A673 (cell line): ENCODE measurements at regions of chr11 and their contacts with region 1.

Region 1: GRCh38 chr11:58579192-58580129 is 598 bp downstream of the ZFP91 start:
- DNase-seq: peak; percentile 97
- H3K4me3 ChIP-seq: peak overlapping the region; percentile 67
- H3K27ac ChIP-seq: peak overlapping the region; percentile 100
- H3K4me1 ChIP-seq: peaks cover 22% of the 10 kb centered on the region
- H3K27me3 ChIP-seq: no peaks in the 10 kb centered on the region
- CTCF ChIP-seq: peak; percentile 78

Region 2: DNA sequence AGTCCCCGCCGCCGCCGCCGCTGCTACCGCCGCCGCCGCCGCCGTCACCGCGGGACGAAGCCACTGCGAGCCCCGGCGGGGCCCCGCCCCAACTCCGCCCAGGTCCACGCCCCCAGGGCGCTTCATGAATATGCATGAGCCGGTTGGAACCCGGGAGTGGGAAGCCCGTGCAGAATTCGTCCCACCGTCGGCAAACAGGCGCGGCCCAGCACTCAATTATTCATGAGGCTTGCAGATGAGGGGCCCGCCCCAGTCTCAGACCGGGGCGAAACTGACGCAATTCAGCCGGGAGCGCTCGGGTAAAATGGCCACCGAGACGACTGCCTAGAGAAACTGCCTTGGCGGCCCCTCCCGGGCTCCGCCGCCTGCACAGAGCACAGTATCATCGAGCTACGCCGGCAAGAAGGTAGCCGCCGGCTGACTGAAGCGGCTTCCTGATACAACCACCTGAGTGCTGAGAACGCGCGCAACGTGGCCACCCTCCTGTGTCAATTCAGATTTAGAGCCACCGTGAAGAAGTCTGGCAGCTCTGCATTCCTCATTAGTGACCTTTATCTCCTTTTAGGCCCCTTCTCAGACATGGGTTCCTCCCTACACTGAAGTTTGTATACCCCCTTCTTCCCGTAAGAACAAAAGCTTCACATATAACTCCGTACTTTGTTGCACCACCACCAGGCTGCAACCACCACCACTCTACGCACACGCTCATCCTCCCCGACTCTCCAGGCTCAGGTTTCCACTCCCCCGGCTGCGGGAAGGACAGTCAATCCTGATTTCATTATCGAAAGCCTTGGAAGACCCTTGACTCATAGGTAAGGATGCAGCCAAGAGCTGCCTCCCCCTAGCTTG is 1254.4 kb before region 1 on chr11 and contains the start of gene TNKS1BP1:
- CTCF ChIA-PET with region 1: no interaction called
- POLR2A ChIA-PET with region 1: no interaction called
- intact Hi-C with region 1: loop called (anchors 10 kb)
- DNase-seq: peak; percentile 99
- H3K4me3 ChIP-seq: peak within 1 kb of the TSS; percentile 74
- H3K27ac ChIP-seq: peak within 1 kb of the TSS; percentile 85
- H3K4me1 ChIP-seq: peaks cover 43% of the 10 kb centered on the region
- H3K27me3 ChIP-seq: no peaks in the 10 kb centered on the region
- CTCF ChIP-seq: no peak
- total RNA-seq, gene TNKS1BP1: 80.4 and 88.8 TPM in 2 replicates

Region 3: DNA sequence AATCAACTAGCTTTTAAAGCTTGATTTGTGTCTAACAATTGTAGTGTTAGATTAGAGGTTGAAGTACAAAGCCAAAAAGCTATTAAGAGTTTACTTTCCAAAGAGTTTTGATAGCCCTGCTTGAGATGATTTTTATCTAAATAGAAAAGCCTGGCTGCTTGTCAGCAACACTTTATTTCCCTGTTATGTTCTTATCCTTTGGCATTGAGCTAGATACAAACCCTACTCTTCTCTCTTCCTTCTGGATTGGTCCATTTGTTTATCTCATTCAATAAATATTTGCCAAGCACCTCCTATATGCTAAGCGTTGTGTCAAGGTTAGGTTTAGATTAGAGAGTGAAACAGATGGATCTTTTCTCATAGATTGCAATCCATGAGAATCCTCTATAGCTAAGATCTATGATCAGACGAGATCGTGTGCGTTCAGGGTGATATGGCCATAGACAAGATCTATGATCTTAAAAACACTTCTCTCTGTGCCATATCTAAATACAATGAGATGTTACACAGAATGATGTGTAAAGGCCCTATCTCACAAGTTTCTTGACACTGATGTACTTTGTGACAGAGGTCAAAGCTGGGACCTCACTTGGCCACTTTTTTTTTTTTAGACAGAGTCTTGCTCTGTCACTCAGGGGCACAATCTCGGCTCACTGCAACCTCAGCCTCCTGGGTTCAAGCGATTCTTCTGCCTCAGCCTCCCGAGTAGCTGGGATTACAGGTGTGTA is 760.0 kb before region 1 on chr11:
- CTCF ChIA-PET with region 1: no interaction called
- POLR2A ChIA-PET with region 1: no interaction called
- intact Hi-C with region 1: no loop called
- DNase-seq: no peak
- H3K4me3 ChIP-seq: no peak overlapping the region
- H3K27ac ChIP-seq: no peak overlapping the region
- H3K4me1 ChIP-seq: no peaks in the 10 kb centered on the region
- H3K27me3 ChIP-seq: no peaks in the 10 kb centered on the region
- CTCF ChIP-seq: no peak

Region 4: DNA sequence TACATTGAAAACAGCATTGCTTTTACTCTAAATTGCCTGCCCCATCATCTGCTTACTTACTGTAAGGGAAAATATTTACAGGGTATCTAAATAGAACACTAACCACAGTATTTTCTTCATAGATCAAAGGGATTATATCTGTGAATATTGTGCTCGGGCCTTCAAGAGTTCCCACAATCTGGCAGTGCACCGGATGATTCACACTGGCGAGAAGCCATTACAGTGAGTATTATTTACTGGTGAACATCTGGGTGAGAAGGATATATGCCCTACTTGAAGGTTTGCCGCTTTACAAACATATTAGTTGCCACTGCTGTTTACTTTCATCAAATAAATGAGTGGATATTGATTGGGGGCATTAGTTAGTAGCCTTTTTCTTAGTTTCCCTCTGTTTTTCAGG is 37.1 kb after region 1 on chr11:
- CTCF ChIA-PET with region 1: interaction called, 3 read pairs
- POLR2A ChIA-PET with region 1: no interaction called
- intact Hi-C with region 1: loop called (anchors 5 kb)
- DNase-seq: peak; percentile 50
- H3K4me3 ChIP-seq: no peak overlapping the region
- H3K27ac ChIP-seq: no peak overlapping the region
- H3K4me1 ChIP-seq: peaks cover 17% of the 10 kb centered on the region
- H3K27me3 ChIP-seq: no peaks in the 10 kb centered on the region
- CTCF ChIP-seq: no peak

Region 5: GRCh38 chr11:58675334-58676155 is 96.1 kb after region 1 on chr11:
- CTCF ChIA-PET with region 1: interaction called, 3 read pairs
- POLR2A ChIA-PET with region 1: no interaction called
- intact Hi-C with region 1: loop called (anchors 1 kb)
- DNase-seq: peak; percentile 75
- H3K4me3 ChIP-seq: no peak overlapping the region
- H3K27ac ChIP-seq: no peak overlapping the region
- H3K4me1 ChIP-seq: no peaks in the 10 kb centered on the region
- H3K27me3 ChIP-seq: no peaks in the 10 kb centered on the region
- CTCF ChIP-seq: peak; percentile 99

Region 6: DNA sequence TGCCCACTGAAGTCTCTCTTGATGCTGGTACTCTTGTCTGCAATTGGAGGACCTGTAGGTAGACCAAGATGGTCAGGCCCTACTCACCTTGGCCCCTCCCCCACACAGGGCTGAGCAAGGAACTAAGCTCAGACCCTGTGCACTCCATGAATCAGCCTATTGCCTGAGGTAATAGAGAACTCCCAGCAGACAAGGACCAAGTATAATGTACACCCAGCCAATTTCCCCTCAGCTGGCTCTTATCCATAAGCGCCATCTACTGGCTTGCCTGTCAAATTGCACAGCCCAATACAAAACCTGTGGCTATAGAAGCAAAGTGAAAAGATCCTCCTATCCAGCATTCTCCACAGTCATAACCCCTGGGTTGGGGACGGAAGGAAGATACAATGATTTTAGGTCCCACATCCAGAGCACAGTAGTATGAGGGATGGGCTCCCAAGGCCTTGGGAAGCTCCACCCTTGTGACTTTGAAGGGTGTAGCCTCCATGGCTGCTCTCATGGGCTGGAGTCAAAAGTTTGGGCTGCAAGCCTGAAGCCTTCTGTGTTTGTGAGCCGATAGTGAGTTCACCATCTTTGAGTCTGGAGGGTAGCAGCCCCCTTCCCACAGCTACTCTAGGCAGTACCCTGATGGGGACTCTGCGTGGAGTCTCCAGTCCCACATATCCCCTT is 209.0 kb after region 1 on chr11:
- CTCF ChIA-PET with region 1: no interaction called
- POLR2A ChIA-PET with region 1: no interaction called
- intact Hi-C with region 1: loop called (anchors 5 kb)
- DNase-seq: peak; percentile 78
- H3K4me3 ChIP-seq: no peak overlapping the region
- H3K27ac ChIP-seq: no peak overlapping the region
- H3K4me1 ChIP-seq: no peaks in the 10 kb centered on the region
- H3K27me3 ChIP-seq: no peaks in the 10 kb centered on the region
- CTCF ChIP-seq: peak; percentile 98

Region 7: GRCh38 chr11:58900479-58901420 is 321.3 kb after region 1 on chr11:
- CTCF ChIA-PET with region 1: no interaction called
- POLR2A ChIA-PET with region 1: no interaction called
- intact Hi-C with region 1: loop called (anchors 10 kb)
- DNase-seq: peak; percentile 84
- H3K4me3 ChIP-seq: no peak overlapping the region
- H3K27ac ChIP-seq: no peak overlapping the region
- H3K4me1 ChIP-seq: no peaks in the 10 kb centered on the region
- H3K27me3 ChIP-seq: peaks cover 22% of the 10 kb centered on the region
- CTCF ChIP-seq: peak; percentile 79